Naive thymus-derived CD4-positive, alpha-beta T cell (primary cell): ENCODE measurements at regions of chr7 and their contacts with region 1.

Region 1: DNA sequence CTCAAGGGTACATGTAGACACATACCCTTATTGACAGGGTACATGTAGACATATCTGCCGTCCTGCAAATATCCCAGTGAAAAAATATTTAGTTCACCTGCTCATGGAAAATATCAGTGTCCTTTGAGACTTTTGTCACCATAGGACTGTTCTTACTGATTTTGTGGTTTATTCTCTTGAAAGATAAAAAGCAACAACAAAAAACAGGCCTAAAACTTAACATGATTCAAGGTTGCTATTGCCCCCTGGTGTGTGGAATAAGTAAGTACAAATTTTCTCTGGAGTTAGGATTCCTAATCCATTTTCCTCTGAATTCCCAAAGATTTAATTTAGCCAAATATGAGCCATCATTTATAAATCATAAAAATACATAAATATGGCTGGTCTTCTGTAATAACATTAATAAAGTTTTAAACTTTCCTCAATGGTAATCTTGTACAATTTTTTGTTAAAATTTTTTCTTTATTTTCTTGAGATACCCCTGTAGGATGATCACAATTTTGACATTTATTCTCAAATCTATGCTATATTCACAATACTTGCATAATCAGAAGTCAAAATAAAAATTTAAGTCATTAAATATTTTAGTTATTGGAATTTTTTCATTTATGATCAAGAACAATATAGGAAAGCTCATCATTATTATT is 741.4 kb upstream of the POT1 start:
- DNase-seq: no peak
- ATAC-seq: no peak
- H3K4me3 ChIP-seq: no peak overlapping the region
- H3K4me3 Mint-ChIP-seq: no peak overlapping the region
- H3K27ac ChIP-seq: no peak overlapping the region
- H3K27ac Mint-ChIP-seq: no peak overlapping the region
- H3K4me1 ChIP-seq: no peaks in the 10 kb centered on the region
- H3K4me1 Mint-ChIP-seq: no peaks in the 10 kb centered on the region
- H3K27me3 ChIP-seq: no peaks in the 10 kb centered on the region
- H3K27me3 Mint-ChIP-seq: no peaks in the 10 kb centered on the region

Region 2: GRCh38 chr7:125061776-125062397 is 609.2 kb before region 1 on chr7:
- CTCF ChIA-PET with region 1: no interaction called
- POLR2A ChIA-PET with region 1: no interaction called
- intact Hi-C with region 1: loop called in 1 of 2 experiments (anchors 5 kb)
- DNase-seq: no peak
- ATAC-seq: no peak
- H3K4me3 ChIP-seq: no peak overlapping the region
- H3K4me3 Mint-ChIP-seq: no peak overlapping the region
- H3K27ac ChIP-seq: no peak overlapping the region
- H3K27ac Mint-ChIP-seq: no peak overlapping the region
- H3K4me1 ChIP-seq: no peaks in the 10 kb centered on the region
- H3K4me1 Mint-ChIP-seq: no peaks in the 10 kb centered on the region
- H3K27me3 ChIP-seq: no peaks in the 10 kb centered on the region
- H3K27me3 Mint-ChIP-seq: peaks cover 0 to 9% (median 0%) of the 10 kb centered on the region in 5 donors

Region 3: DNA sequence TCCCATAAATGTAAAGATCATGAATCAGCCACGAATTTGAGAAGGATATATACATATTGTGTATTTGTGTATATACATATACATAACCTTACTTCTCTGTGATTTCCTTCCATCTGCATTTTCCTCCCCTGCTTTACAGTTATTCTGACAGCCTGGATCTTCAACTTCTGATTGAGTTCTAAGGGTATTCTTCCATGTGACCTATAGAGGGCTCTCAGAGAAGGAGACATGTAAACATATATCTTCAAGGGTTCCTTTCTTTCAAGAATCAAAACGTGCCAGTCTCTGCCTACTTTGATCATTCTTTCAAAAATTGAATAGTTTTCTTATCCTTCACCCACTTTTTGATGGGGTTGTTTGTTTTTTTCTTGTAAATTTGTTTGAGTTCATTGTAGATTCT is 287.7 kb before region 1 on chr7:
- CTCF ChIA-PET with region 1: no interaction called
- POLR2A ChIA-PET with region 1: no interaction called
- intact Hi-C with region 1: loop called in 1 of 2 experiments (anchors 5 kb)
- DNase-seq: no peak
- ATAC-seq: no peak
- H3K4me3 ChIP-seq: no peak overlapping the region
- H3K4me3 Mint-ChIP-seq: no peak overlapping the region
- H3K27ac ChIP-seq: no peak overlapping the region
- H3K27ac Mint-ChIP-seq: no peak overlapping the region
- H3K4me1 ChIP-seq: no peaks in the 10 kb centered on the region
- H3K4me1 Mint-ChIP-seq: no peaks in the 10 kb centered on the region
- H3K27me3 ChIP-seq: no peaks in the 10 kb centered on the region
- H3K27me3 Mint-ChIP-seq: no peaks in the 10 kb centered on the region

Region 4: DNA sequence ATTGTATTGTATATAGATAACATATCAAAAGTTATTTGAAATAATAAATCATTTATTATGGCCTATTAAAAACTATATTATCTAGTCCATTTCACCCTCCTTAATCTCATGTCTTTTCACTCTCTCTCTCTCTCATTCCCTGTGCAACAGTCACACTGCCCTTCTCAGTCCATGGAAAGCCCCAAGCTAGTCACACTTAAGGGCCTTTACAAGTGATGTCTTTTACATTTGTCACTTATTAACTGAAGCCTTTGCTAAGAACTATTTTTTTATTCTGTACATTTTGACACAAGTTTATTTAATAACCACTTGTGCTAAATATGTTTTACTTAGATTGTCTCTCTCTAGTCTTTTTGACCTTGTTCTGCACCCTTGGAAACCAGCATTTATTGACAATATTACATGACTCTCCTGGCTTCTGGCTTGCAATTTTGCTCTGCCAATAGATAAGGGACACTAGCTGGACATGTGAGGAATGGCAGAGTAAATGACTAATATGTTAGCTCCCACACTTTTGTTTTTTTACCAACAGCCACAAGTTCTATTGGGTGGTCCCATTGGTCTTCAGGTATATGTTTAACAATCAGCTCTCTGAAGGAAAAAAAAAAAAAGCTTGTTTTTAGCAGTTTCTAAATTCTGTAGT is 34.6 kb before region 1 on chr7:
- CTCF ChIA-PET with region 1: no interaction called
- POLR2A ChIA-PET with region 1: no interaction called
- intact Hi-C with region 1: no loop called
- DNase-seq: no peak
- ATAC-seq: no peak
- H3K4me3 ChIP-seq: no peak overlapping the region
- H3K4me3 Mint-ChIP-seq: no peak overlapping the region
- H3K27ac ChIP-seq: no peak overlapping the region
- H3K27ac Mint-ChIP-seq: no peak overlapping the region
- H3K4me1 ChIP-seq: no peaks in the 10 kb centered on the region
- H3K4me1 Mint-ChIP-seq: no peaks in the 10 kb centered on the region
- H3K27me3 ChIP-seq: no peaks in the 10 kb centered on the region
- H3K27me3 Mint-ChIP-seq: no peaks in the 10 kb centered on the region